ENCODE measurements at regions of chr2 and their contacts with region 1.

Region 1: DNA sequence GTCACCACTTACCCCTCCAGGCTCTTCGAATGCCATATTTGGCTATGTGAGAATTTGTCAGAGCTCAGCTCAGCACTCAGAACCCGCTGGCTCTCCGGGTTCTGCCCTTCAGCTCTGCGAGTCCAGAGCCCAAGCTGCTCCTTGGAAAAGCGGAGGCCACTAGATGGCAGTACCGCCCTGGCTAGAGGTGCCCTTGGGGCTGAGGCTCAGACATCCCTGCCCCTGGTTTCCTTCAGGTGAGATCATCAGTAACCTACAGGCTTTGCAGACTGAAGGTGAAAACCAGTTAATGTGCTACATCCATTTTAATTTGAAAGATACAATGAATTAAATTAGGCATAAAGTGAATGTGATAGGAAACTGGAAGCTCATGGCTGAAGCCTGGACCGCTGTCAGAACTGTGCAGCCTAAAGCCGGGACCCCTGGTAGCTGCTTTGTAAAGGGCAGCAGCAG is 285.6 kb downstream of the AGAP1 start:
- DNase-seq: no peak
- H3K4me3 ChIP-seq: no peak overlapping the region
- CTCF ChIP-seq: peak; percentile 92

Region 2: GRCh38 chr2:235766278-235766677 is 13.2 kb before region 1 on chr2:
- CTCF ChIA-PET with region 1: interaction called, 39 read pairs
- POLR2A ChIA-PET with region 1: no interaction called
- DNase-seq: no peak
- H3K4me3 ChIP-seq: no peak overlapping the region
- CTCF ChIP-seq: peak; percentile 63

Region 3: GRCh38 chr2:235802538-235803427 is 23.3 kb after region 1 on chr2:
- CTCF ChIA-PET with region 1: interaction called, 35 read pairs
- POLR2A ChIA-PET with region 1: no interaction called
- DNase-seq: no peak
- H3K4me3 ChIP-seq: no peak overlapping the region
- CTCF ChIP-seq: no peak

Region 4: GRCh38 chr2:235827585-235827992 is 48.1 kb after region 1 on chr2:
- CTCF ChIA-PET with region 1: no interaction called
- POLR2A ChIA-PET with region 1: no interaction called
- DNase-seq: no peak
- H3K4me3 ChIP-seq: no peak overlapping the region
- CTCF ChIP-seq: no peak

Region 5: DNA sequence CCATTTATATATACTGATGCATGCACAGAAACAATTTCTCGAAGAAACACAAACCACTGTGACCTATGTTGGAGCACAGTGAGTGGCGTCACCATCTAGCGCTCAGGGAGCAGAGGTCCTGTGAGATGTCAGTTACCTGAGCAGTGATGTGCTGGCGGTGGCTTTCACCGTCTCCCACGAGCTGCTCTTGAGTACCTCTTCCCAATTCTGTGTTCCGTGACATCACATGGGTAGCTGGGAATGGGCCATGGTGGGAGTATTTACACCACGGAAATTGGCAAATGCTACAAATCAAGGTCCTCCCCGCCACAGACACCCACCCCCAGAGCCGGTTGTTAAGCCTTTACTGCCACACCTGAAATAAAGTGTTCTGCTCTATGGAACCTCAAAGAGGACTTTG is 364.3 kb after region 1 on chr2:
- CTCF ChIA-PET with region 1: interaction called, 11 read pairs
- POLR2A ChIA-PET with region 1: no interaction called
- DNase-seq: no peak
- H3K4me3 ChIP-seq: no peak overlapping the region
- CTCF ChIP-seq: no peak

Region 6: GRCh38 chr2:236193051-236193450 is 413.6 kb after region 1 on chr2:
- CTCF ChIA-PET with region 1: interaction called, 12 read pairs
- POLR2A ChIA-PET with region 1: no interaction called
- DNase-seq: no peak
- H3K4me3 ChIP-seq: no peak overlapping the region
- CTCF ChIP-seq: no peak

Measured in AG04449 (cell line).